ENCODE measurements at regions of chr18 and their contacts with region 1.

Region 1: DNA sequence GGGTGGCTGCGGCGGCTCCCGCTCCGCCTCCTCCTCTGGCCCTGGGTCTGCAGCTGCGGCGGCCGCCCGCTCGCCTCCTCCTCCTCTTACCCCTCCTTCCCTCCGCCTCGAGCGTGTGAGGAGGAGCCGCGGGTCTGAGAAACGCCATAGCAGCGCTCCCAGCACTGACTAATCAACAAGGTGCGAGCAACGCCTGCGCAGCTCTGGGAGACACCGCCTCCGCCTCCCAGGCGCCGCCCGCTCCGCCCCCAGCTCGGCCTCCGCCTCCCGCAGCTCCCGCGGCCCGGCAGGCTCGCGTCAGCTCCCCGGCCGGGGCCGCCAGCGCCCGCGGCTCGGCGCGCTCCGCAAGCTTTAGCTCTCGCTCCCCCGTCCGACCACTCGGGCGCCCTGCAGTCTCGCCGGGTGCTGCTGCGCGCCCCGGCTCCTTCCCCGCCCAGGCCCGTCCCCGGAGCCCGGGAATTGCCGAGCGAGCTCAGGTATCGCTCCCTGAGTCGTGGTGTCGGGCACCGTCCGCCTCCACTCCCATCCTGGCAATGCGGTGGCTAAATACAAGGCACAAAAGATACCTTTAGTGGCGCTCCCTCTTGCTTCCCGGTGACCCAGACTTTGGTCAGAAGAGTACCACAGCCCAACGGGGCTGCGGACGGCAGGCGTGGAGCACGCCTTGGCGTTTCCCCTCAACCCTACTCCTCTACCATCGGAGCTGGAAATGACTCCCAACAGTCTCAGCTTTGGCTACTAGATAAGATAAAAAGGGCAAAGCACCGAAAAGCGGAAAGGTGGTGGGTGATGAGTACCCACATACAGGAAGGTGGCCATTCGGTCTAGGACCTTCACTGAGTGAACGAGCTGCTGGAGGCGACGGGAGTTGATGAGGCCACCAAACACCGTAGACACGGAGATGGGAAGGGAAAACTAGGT is at the start of gene GAREM1:
- DNase-seq: peak; percentile 99

Region 2: DNA sequence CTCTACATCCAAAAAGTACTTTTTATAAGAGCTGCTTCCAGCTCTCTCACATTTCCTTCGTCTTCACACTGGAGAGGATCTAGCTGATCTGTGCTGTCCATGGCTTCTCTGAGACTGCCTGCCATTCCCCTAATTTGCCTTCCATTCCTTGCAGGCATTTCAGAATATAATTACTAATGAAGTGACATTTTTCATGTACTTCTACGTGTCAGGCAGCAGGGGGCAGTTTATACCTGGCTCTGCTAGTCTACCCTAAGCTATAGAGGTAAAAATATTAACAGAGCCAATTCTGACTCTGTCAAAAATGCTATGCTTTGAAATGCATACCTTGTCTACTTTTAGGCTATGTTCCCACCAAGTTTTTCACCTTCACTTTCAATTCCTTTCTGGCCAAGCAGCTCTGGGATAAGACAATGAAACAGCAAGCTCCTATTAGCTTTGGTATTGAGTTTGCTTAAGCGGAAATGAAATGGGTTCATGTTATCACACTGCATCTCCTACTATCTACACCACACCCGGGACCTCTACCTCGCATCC is 199.2 kb before region 1 on chr18:
- CTCF ChIA-PET with region 1: interaction called, 40 read pairs
- POLR2A ChIA-PET with region 1: interaction called, 20 read pairs
- DNase-seq: peak; percentile 81

Region 3: DNA sequence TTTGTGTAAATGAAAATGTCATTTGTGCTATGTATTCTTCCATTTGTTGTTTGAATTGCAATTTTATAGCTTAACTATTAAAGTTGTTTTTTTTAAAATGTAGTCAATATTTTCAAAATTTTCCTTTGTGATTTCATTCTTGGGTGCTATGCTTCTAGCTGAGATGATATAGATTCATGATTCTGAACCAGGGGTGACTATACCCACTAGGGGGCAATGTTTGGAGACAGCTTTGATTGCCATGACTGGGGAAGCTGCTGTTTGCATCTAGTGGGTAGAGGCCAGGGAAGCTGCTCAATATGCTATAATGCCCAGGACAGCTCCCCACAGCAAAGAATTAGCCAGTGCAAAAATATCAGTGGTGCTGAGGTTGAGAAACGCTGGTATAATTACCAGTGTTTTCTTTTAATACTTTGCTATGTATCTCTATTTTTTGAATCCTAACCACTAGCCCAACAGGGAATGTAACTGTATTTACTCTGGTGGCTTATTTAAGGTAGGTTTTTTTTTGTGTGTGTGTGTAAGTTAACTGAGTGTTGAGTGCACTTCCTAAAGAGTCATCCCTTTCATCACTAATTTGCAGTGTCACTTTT is 181.4 kb before region 1 on chr18:
- CTCF ChIA-PET with region 1: interaction called, 42 read pairs
- POLR2A ChIA-PET with region 1: interaction called, 19 read pairs
- DNase-seq: peak; percentile 82

Region 4: DNA sequence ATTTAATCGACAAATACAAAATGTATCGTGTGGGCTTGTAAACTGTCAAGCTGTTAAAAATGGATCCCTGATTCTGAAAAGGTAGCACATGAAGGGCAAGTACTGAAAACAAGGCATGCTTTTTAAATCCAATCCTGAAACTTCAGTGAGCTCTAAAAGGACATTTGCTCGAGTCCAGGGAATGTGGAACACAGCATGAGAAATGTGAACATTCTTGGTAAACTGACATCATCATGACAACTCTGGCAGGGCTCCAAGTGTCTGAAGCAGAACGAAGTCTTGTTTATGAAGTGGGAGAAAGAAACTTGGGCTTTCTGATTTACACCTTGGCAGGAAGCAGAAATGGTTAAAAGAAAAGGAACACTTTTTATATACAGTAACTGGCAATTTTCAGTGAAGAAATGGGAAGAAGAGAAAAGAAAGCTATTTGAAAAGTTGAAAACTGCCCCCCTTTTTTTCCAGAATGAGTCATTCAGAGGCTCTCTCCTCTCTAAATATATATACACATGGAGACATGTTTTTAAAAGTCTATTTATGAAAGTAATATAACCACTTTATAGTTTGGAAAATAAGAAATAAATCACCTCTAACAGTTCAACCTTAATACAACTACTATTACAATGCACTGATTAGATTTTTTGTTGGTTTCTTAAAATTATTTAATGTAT is 121.1 kb before region 1 on chr18:
- CTCF ChIA-PET with region 1: interaction called, 3 read pairs
- POLR2A ChIA-PET with region 1: interaction called, 11 read pairs
- DNase-seq: peak; percentile 76

Region 5: GRCh38 chr18:32439802-32440201 is 31.2 kb before region 1 on chr18:
- CTCF ChIA-PET with region 1: interaction called, 34 read pairs
- POLR2A ChIA-PET with region 1: interaction called, 8 read pairs
- DNase-seq: peak; percentile 76

Measured in HEK293T (cell line).